GM12878 (cell line): ENCODE measurements at regions of chr17 and their contacts with region 1.

Region 1: GRCh38 chr17:9700754-9701476 is 55.6 kb downstream of the USP43 start:
- DNase-seq: no peak
- ATAC-seq: no peak
- H3K4me3 ChIP-seq: no peak overlapping the region
- H3K27ac ChIP-seq: no peak overlapping the region
- H3K4me1 ChIP-seq: no peaks in the 10 kb centered on the region
- H3K27me3 ChIP-seq: no peaks in the 10 kb centered on the region
- CTCF ChIP-seq: no peak
- EP300 ChIP-seq: no peak
- POLR2A ChIP-seq: no peak
- RAD21 ChIP-seq: no peak

Region 2: DNA sequence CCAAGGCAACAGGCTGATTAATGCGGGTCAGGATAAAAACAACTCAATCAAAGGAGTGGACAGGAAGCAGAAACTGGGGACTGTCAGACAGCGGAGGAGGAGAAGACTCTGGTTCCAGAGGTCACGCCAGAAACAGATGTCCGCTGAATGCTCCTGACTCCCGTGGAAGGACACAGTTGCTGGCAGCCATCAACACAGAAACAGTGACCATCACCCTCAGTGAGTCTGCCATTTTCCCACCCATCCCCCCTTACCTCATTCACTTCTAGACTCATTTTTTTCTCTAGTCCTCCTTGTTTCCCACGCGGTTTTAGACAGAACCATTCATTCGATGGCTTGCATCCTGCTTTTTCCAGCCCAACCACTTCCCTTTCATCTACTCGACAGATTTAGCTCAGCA is 49.6 kb after region 1 on chr17:
- CTCF ChIA-PET with region 1: no interaction called
- POLR2A ChIA-PET with region 1: no interaction called
- RAD21 ChIA-PET with region 1: no interaction called
- SMC1A ChIA-PET with region 1: no interaction called
- in situ Hi-C with region 1: loop called (anchors 5 kb)
- intact Hi-C with region 1: no loop called
- DNase-seq: no peak
- ATAC-seq: no peak
- H3K4me3 ChIP-seq: no peak overlapping the region
- H3K27ac ChIP-seq: no peak overlapping the region
- H3K4me1 ChIP-seq: no peaks in the 10 kb centered on the region
- H3K27me3 ChIP-seq: no peaks in the 10 kb centered on the region
- CTCF ChIP-seq: no peak
- EP300 ChIP-seq: no peak
- POLR2A ChIP-seq: no peak
- RAD21 ChIP-seq: no peak

Region 3: DNA sequence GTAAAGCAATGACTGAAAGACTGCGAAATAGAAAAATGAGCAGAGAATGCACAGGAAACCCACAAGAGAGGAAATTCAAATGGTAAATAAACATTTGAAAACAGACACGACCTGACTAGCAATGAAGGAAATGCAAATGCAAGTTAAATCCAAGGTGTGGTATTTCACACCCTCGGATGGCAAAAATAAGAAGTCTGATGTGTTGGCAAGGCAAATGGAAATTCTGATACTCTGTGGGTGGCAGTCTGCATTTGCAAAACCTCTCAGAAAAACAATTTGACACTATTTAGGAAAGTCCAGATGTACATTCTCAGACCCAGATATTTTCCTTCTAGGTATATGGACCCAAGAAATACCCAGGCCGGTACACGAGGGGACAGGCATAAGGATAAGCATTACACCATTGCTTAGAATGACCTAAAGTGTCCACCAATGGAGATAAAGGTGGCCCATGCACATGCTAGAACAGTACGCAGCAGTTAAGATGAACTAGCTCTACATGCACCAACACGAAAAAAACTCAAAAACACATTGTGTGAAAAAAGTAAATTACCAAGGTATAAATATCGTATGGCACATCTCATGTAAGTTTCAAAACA is 380.8 kb after region 1 on chr17:
- CTCF ChIA-PET with region 1: no interaction called
- POLR2A ChIA-PET with region 1: no interaction called
- RAD21 ChIA-PET with region 1: no interaction called
- SMC1A ChIA-PET with region 1: no interaction called
- in situ Hi-C with region 1: no loop called
- intact Hi-C with region 1: no loop called
- DNase-seq: no peak
- ATAC-seq: no peak
- H3K4me3 ChIP-seq: no peak overlapping the region
- H3K27ac ChIP-seq: no peak overlapping the region
- H3K4me1 ChIP-seq: peaks cover 4% of the 10 kb centered on the region
- H3K27me3 ChIP-seq: no peaks in the 10 kb centered on the region
- CTCF ChIP-seq: no peak
- EP300 ChIP-seq: no peak
- POLR2A ChIP-seq: no peak
- RAD21 ChIP-seq: no peak